Head of caudate nucleus (tissue), 42 donors: ENCODE measurements at regions of chr1 and their contacts with region 1.

Region 1: GRCh38 chr1:160046494-160047110 is 14.8 kb upstream of the PIGM start:
- DNase-seq: peak; percentile 77 to 96 (median 90)

Region 2: DNA sequence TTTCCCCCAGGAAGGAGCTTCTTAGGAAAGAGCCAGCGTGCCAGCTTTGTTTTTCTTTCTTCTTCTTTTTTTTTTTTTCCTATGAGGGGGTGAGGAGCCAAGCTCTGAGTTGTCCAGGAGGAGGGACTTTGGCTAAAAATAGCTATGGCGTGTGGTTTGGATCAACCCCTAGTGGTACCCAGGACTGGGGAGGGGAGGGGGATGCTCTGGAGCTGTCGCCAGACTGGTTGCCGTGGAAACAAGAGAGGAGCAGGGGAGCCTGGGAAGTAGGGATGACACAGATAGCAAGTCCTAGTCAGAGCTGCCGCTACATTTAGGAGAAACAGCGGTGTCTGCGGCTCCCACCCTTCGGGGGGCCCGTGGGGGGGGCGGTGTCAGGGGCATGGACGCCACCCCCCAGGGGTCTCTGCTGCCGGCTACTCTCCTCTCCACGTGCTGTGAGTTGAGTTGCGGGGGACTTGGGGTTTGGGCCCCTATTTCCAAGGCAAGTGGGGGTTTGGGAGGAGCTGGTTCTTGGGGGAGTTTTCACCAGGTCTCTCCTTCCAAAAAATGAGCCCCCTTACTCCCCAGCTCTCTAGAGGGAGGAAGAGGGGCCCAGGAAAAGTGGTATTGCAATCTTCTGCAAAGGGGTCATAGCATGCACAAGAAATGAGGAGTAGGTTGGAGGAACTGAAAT is 34.8 kb after region 1 on chr1 and contains the start of gene KCNJ9:
- intact Hi-C with region 1: loop called (anchors 2 kb)
- DNase-seq: peak; percentile 76 to 99 (median 93)